Left ventricle myocardium inferior (tissue), 1 donor: ENCODE measurements at regions of chr3 and their contacts with region 1.

Region 1: DNA sequence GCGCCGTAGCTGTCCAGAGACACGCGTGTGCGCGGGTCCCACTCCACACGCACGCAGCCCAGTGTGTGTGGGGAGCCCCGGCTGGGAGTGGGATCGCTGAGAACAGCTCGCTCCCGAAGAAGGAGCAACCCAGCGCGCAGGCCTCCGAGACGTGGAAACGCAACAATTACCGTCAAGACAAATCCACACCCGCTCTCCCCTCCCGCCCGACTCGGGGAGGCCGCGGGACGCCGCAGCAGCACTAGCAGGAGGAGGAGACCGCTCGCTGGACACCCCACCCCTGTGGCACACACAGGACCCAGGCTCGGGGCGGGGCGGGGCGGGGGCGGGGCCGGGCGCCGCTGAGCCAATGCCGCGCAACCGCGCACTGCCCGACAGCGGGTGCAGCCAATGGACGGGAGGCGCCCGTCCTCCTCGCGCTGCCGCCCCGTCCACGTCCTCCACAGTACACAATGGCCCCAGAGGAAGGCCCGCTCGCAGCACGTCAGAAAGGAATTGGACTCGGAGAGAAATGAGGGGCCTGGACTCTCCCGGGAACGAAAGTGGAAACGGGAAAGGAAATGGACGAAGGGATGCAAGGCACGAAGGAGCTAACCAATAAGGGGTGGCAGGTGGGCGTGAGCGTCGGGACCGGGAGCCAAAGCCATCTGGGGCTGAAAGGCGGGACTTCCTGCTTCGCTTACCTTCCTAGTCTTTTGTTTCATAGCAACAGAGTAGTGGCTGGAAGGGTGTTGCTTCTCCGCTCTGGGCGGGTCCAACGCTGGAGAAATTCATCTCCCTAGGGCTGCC is at the start of gene CBLB:
- DNase-seq: peak; percentile 93
- H3K4me3 ChIP-seq: peak within 1 kb of the TSS; percentile 96
- H3K27ac ChIP-seq: peak within 1 kb of the TSS; percentile 99
- H3K4me1 ChIP-seq: peaks cover 62% of the 10 kb centered on the region
- H3K27me3 ChIP-seq: no peaks in the 10 kb centered on the region
- CTCF ChIP-seq: no peak
- total RNA-seq, gene CBLB: 46.7 TPM

Region 2: GRCh38 chr3:105691633-105692032 is 177.3 kb before region 1 on chr3:
- intact Hi-C with region 1: loop called (anchors 10 kb)
- DNase-seq: no peak
- H3K4me3 ChIP-seq: no peak overlapping the region
- H3K27ac ChIP-seq: peak overlapping the region; percentile 47
- H3K4me1 ChIP-seq: peaks cover 56% of the 10 kb centered on the region
- H3K27me3 ChIP-seq: no peaks in the 10 kb centered on the region
- CTCF ChIP-seq: no peak

Region 3: GRCh38 chr3:105997800-105998526 is 129.0 kb after region 1 on chr3:
- intact Hi-C with region 1: no loop called
- DNase-seq: no peak
- H3K4me3 ChIP-seq: no peak overlapping the region
- H3K27ac ChIP-seq: peak overlapping the region; percentile 61
- H3K4me1 ChIP-seq: no peaks in the 10 kb centered on the region
- H3K27me3 ChIP-seq: no peaks in the 10 kb centered on the region
- CTCF ChIP-seq: no peak